ENCODE measurements at regions of chr9 and their contacts with region 1.

Region 1: GRCh38 chr9:15231788-15232635 is 75.0 kb downstream of the TTC39B start:
- DNase-seq: peak; percentile 25
- H3K4me3 Mint-ChIP-seq: no peak overlapping the region
- H3K27ac Mint-ChIP-seq: no peak overlapping the region
- H3K4me1 Mint-ChIP-seq: peaks cover 47% of the 10 kb centered on the region
- H3K27me3 Mint-ChIP-seq: no peaks in the 10 kb centered on the region

Region 2: GRCh38 chr9:15220658-15221318 is 11.2 kb before region 1 on chr9:
- CTCF ChIA-PET with region 1: interaction called, 24 read pairs
- intact Hi-C with region 1: no loop called
- DNase-seq: no peak
- H3K4me3 Mint-ChIP-seq: no peak overlapping the region
- H3K27ac Mint-ChIP-seq: peak overlapping the region; percentile 6
- H3K4me1 Mint-ChIP-seq: peaks cover 27% of the 10 kb centered on the region
- H3K27me3 Mint-ChIP-seq: no peaks in the 10 kb centered on the region

Region 3: GRCh38 chr9:15306757-15307534 is 74.9 kb after region 1 on chr9 and contains the start of gene TTC39B:
- CTCF ChIA-PET with region 1: interaction called, 3 read pairs
- intact Hi-C with region 1: loop called (anchors 1 kb)
- DNase-seq: peak; percentile 86
- H3K4me3 Mint-ChIP-seq: peak within 1 kb of the TSS; percentile 99
- H3K27ac Mint-ChIP-seq: peak within 1 kb of the TSS; percentile 95
- H3K4me1 Mint-ChIP-seq: peaks cover 57% of the 10 kb centered on the region
- H3K27me3 Mint-ChIP-seq: no peaks in the 10 kb centered on the region
- total RNA-seq, gene TTC39B: 43.9 to 46.4 TPM

Measured in activated naive CD4-positive, alpha-beta T cell treated with anti-CD3 and anti-CD28 coated beads for 36 hours (primary cell).